PC-9 (cell line): ENCODE measurements at regions of chr3 and their contacts with region 1.

Region 1: GRCh38 chr3:124747111-124747981 is 17.1 kb downstream of the UMPS start:
- DNase-seq: no peak
- H3K4me3 ChIP-seq: no peak overlapping the region
- H3K27ac ChIP-seq: no peak overlapping the region
- H3K4me1 ChIP-seq: no peaks in the 10 kb centered on the region
- H3K27me3 ChIP-seq: no peaks in the 10 kb centered on the region
- CTCF ChIP-seq: no peak

Region 2: DNA sequence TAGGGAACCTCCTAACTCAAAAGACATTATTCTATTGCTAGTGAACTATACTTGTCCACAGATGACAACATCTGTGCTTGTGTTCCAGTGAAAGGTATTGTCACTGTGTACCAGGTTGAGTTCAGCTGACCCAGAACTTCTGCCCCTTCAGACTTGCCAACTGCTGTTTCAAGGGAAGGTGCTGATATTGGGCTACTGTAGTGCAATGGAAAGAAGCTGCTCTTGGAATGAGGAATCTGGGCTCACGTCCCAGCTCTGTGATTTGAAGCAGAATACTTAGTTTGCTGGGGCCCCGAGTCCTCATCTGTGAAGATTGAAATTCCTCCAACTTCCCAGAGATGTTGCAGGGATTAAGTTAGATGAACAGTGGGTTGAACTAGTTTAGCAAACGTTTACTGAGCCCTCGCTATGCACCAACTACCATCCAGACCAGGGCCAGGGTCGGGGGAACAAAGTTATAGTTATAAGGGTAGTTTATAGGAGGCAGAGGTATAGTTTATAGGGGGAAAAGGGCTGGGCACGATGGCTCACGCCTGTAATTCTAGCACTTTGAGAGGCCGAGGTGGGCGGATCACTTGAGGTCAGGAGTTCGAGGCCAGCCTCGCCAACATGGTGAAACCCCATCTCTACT is 33.0 kb before region 1 on chr3:
- CTCF ChIA-PET with region 1: no interaction called
- POLR2A ChIA-PET with region 1: no interaction called
- intact Hi-C with region 1: no loop called
- DNase-seq: no peak
- H3K4me3 ChIP-seq: no peak overlapping the region
- H3K27ac ChIP-seq: no peak overlapping the region
- H3K4me1 ChIP-seq: no peaks in the 10 kb centered on the region
- H3K27me3 ChIP-seq: no peaks in the 10 kb centered on the region
- CTCF ChIP-seq: no peak

Region 3: DNA sequence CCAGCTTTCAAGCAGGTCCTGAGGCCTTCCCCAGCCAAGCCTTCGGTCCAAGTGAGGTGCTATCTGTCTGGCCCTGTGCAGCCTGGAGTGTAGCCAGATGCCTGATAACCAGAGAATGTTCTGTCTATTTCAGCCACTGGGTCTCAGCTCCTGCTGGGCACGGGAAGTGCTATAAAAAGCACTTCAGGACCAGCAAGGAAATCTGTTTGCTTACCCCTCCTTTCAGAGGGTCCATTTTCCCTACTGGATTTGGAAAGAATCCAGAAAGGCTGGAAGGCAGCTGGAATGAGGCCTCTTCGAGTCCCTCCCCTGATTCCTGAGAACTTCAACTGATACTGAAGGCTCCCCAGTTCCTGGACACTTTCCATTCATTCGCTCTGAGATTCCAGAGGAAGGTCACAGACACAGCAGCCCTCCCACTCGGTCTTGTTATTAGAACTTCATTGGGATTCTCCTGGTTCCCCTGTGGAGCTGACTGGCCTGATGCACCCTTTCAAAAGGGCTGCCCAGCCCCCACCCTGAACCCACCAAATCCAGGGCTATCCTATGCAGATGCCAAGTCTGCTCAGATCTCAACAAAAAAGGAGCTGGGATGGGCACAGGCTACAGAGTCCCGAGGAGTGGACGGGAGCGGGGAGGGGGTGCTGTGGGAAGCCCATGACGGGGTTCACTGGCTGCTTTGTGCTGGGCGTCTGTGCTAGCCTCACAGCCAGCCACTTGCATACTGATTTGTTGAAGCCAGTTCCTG is 53.3 kb after region 1 on chr3:
- CTCF ChIA-PET with region 1: no interaction called
- POLR2A ChIA-PET with region 1: interaction called, 17 read pairs
- intact Hi-C with region 1: no loop called
- DNase-seq: no peak
- H3K4me3 ChIP-seq: no peak overlapping the region
- H3K27ac ChIP-seq: no peak overlapping the region
- H3K4me1 ChIP-seq: no peaks in the 10 kb centered on the region
- H3K27me3 ChIP-seq: no peaks in the 10 kb centered on the region
- CTCF ChIP-seq: no peak